HCT116 (cell line): ENCODE measurements at regions of chr7 and their contacts with region 1.

Region 1: DNA sequence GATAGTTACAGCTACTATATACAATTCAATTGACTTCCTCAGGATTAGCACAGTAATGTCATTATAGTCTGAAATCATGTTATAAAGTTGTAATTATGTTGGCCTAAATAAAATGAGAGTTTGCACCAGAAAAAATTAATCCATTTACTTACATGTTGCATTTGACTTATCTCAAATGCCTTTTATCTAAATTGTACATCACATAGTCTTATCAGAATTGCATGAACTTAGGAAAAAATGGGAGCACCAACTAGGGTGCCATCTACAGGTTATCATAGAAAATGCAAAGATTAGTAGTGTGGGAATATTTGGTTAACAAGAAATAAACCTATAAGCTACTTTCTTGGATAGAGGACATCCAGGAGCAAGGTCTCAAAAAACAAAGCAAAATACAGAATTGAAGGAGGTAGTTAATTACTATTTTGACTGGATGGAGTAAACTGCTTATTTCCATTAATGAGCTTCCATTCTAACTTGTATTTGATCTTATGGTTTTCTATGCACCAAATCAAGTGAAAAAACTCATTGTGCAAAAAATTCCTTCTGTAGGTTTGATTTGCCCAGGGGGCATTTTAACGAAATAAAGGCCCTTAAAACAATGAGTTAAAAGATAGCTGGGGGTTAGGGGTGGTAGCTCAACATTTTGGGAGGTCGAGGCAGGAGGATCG is 60.0 kb upstream of the ORC5 start:
- DNase-seq: no peak
- ATAC-seq: no peak
- H3K4me3 ChIP-seq: no peak overlapping the region
- H3K27ac ChIP-seq: no peak overlapping the region
- H3K4me1 ChIP-seq: no peaks in the 10 kb centered on the region
- H3K27me3 ChIP-seq: peaks cover 13% of the 10 kb centered on the region
- CTCF ChIP-seq: peak; percentile 10 to 44 (median 34); a peak in 5 of 6 replicates
- POLR2A ChIP-seq: no peak
- RAD21 ChIP-seq: no peak

Region 2: GRCh38 chr7:104231054-104232046 is 36.5 kb before region 1 on chr7:
- CTCF ChIA-PET with region 1: interaction called, 13 read pairs
- POLR2A ChIA-PET with region 1: no interaction called
- RAD21 ChIA-PET with region 1: no interaction called
- intact Hi-C with region 1: no loop called
- DNase-seq: peak; percentile 36
- ATAC-seq: peak; percentile 98
- H3K4me3 ChIP-seq: no peak overlapping the region
- H3K27ac ChIP-seq: no peak overlapping the region
- H3K4me1 ChIP-seq: no peaks in the 10 kb centered on the region
- H3K27me3 ChIP-seq: peaks cover 12% of the 10 kb centered on the region; the same call in 1 of the 2 replicates
- CTCF ChIP-seq: peak; percentile 54 to 87 (median 85)
- POLR2A ChIP-seq: no peak
- RAD21 ChIP-seq: peak; percentile 79